ENCODE measurements at regions of chr21 and their contacts with region 1.

Region 1: GRCh38 chr21:40461008-40461407 is 385.9 kb downstream of the DSCAM start:
- DNase-seq: no peak
- ATAC-seq: no peak
- H3K4me3 ChIP-seq: no peak overlapping the region
- H3K27ac ChIP-seq: no peak overlapping the region
- H3K4me1 ChIP-seq: no peaks in the 10 kb centered on the region
- H3K27me3 ChIP-seq: peaks cover 0 to 5% of the 10 kb centered on the region in 2 donors
- CTCF ChIP-seq: no peak
- POLR2A ChIP-seq: no peak

Region 2: DNA sequence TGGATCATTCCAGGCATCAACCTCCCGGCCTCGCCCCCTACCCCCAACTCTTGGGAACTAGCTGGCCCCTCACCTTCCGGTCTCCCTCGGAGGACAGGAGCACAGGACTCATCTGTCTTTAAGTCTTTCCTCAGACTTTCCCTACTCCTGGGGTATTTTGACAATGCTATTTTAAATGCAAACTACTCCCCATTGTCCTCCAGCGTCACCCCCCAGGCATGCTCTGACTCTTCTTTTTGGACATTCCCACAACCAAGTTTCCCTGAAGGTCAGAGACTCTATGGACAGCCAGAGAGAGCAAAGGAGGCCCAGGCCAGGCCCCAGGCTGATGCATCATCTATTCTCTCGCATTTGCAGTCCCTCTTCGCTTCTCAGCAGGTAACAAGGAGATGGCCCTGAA is 169.4 kb before region 1 on chr21:
- intact Hi-C with region 1: no loop called
- DNase-seq: no peak
- ATAC-seq: no peak
- H3K4me3 ChIP-seq: no peak overlapping the region
- H3K27ac ChIP-seq: no peak overlapping the region
- H3K4me1 ChIP-seq: no peaks in the 10 kb centered on the region
- H3K27me3 ChIP-seq: no peaks in the 10 kb centered on the region
- CTCF ChIP-seq: no peak
- POLR2A ChIP-seq: no peak

Region 3: DNA sequence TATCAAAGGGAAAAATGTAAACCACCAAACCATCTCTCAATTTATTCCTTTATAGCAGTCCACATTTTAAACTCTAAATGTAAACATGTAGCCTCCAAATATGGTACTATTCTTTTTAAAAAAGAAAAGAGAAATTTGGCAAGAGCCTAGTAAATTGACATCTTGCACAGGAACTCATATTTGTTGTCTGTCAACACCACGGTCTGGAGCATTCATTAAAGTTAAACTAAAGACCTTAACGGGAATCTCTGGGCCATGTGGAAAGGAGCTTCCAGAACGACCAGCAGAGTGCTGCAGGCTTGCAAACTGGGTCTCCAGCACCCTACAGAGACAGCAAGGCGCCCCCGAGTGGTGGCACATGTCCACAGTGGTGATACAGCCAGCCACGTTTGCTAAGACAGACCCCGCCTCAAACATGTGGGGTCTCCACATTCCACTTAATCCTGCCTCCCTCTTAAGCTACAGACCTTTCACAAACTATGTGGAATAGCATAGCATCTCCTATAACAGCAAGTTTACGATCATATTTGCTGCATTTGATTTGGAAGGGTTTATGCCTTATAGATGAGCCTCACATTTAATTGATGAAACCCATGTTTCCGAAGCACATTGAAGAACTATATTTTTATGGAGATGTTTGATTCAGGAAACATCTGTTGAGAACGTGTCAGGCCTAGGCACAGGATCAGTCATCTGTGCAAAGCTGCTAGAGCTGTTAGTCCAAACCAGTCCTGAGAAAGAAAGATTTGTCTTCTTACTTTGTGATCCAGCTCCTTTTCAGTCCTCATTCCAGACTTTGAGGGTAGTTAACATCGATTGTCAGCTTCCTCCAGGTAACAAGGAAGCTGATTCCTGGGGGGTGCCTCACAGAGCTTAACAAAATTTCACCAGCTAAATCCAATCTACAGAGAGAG is 610.5 kb after region 1 on chr21:
- intact Hi-C with region 1: loop called in 1 of 2 experiments (anchors 5 kb)
- DNase-seq: no peak
- ATAC-seq: no peak
- H3K4me3 ChIP-seq: no peak overlapping the region
- H3K27ac ChIP-seq: no peak overlapping the region
- H3K4me1 ChIP-seq: no peaks in the 10 kb centered on the region
- H3K27me3 ChIP-seq: peaks cover 0 to 7% of the 10 kb centered on the region in 2 donors
- CTCF ChIP-seq: peak in 1 of 4 donors; percentile 7
- POLR2A ChIP-seq: no peak